Activated naive CD4-positive, alpha-beta T cell treated with anti-CD3 and anti-CD28 coated beads, Interleukin-2, amount 10 ng/mL, durations not matched to agents 7 days and 5 days (primary cell): ENCODE measurements at regions of chr22 and their contacts with region 1.

Region 1: DNA sequence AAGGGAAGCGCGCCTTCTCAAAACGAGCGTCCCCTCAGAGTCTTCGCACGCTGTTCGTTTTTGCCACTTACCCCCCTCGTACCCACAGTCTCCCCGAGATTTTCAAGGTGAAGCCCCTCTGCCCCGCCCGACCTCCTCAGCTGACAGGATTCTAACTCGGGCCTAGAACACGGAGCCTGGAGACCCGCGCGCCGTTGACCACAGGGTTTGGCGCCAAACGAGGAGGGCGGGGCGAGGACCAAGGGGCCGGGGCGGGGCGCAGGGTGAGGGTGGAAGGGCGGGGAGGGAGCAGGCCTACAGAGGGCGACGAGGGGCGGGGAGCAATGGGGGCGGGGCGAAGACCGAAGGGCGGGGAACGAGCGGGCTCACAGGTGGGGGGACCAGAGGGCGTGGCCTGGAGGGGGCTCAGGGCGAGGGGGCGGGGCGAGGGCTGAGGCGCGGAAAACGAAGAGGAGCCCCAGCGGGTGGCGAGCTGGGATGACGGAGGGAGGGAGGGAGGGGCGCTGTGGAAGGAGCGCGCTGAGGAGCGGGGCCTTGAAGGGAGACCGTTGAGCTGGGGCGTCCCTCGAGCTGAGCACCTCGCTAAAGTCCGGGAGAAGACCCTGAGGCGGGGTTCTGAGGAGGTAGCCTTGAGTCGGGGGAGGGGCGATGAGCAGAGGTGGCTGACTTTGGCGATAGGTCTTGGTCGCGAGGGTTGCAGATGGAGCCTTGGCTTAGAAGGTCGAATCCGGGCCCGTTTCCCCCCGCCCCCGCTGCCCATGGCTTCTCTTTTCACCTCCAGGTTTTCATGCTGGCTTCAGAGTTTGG is at the start of gene DMC1:
- DNase-seq: peak; percentile 99
- H3K4me3 Mint-ChIP-seq: peak within 1 kb of the TSS; percentile 81
- H3K27ac Mint-ChIP-seq: peak within 1 kb of the TSS; percentile 95
- H3K4me1 Mint-ChIP-seq: peaks cover 22% of the 10 kb centered on the region
- H3K27me3 Mint-ChIP-seq: peaks cover 5% of the 10 kb centered on the region

Region 2: DNA sequence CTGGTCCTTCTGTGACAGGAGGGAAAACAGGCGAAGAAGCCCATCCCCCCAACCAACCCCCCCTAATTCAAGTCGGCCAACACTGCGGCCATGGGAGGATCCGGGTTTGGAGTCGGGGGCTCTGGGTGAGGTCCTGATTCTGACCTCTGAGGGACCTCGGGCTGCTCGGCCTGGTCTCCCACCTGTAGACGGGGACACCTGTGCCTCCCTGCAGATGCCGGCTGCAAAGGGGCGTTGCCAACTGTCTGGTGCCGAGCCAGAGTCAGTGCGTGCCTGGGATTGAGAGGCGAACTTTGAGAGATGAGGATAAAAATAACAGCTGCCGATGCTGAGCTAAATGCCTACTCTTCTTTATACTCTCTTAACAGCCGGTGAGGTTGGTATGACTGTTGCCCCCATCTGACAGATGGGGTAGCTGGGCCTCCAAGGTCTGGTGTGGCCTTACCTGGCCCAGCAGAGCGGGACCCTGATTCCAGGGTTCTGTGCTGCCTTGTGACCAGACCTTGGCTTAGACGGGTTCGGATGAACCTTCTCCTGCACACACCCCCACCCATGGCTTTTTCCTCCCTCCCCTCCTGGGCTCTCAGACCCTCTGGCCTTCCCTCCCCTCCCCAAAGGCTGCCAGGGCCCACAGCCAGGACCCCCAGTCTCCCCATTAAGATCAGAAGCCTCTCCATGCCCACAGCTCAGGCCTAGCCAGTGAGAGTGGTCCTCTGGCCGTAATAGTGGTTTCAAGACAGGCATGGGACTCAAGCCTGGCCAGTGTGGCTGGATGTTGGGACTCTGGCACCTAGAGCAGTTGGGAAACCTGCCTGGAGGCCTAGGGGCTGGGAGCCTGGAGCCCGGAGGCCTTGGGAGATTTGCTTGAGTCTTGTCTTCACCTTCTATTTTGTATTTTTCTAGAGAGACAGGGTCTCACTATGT is 156.8 kb before region 1 on chr22:
- CTCF ChIA-PET with region 1: interaction called, 10 read pairs
- DNase-seq: no peak
- H3K4me3 Mint-ChIP-seq: no peak overlapping the region
- H3K27ac Mint-ChIP-seq: no peak overlapping the region
- H3K4me1 Mint-ChIP-seq: peaks cover 4% of the 10 kb centered on the region
- H3K27me3 Mint-ChIP-seq: peaks cover 10% of the 10 kb centered on the region

Region 3: GRCh38 chr22:38490915-38491314 is 79.3 kb before region 1 on chr22:
- CTCF ChIA-PET with region 1: interaction called, 19 read pairs
- DNase-seq: no peak
- H3K4me3 Mint-ChIP-seq: no peak overlapping the region
- H3K27ac Mint-ChIP-seq: peak overlapping the region; percentile 67
- H3K4me1 Mint-ChIP-seq: peaks cover 61% of the 10 kb centered on the region
- H3K27me3 Mint-ChIP-seq: no peaks in the 10 kb centered on the region